CD4-positive, alpha-beta memory T cell (primary cell): ENCODE measurements at regions of chr10 and their contacts with region 1.

Region 1: GRCh38 chr10:30722956-30723620 is 93.5 kb upstream of the LYZL2 start:
- DNase-seq: no peak
- H3K4me3 ChIP-seq: no peak overlapping the region
- H3K4me3 Mint-ChIP-seq: no peak overlapping the region
- H3K27ac ChIP-seq: no peak overlapping the region
- H3K27ac Mint-ChIP-seq: no peak overlapping the region
- H3K4me1 ChIP-seq: no peaks in the 10 kb centered on the region
- H3K4me1 Mint-ChIP-seq: peaks cover 0 to 4% (median 2%) of the 10 kb centered on the region in 4 donors
- H3K27me3 ChIP-seq: no peaks in the 10 kb centered on the region
- H3K27me3 Mint-ChIP-seq: no peaks in the 10 kb centered on the region

Region 2: GRCh38 chr10:30671026-30671616 is 52.0 kb before region 1 on chr10:
- CTCF ChIA-PET with region 1: interaction called, 16 read pairs
- POLR2A ChIA-PET with region 1: no interaction called
- intact Hi-C with region 1: loop called (anchors 1 kb)
- DNase-seq: peak in 4 of 5 donors; percentile 39 to 47 (median 46)
- H3K4me3 ChIP-seq: no peak overlapping the region
- H3K4me3 Mint-ChIP-seq: peak overlapping the region; percentile 15 to 77 (median 68)
- H3K27ac ChIP-seq: no peak overlapping the region
- H3K27ac Mint-ChIP-seq: no peak overlapping the region
- H3K4me1 ChIP-seq: no peaks in the 10 kb centered on the region
- H3K4me1 Mint-ChIP-seq: peaks cover 0 to 7% (median 2%) of the 10 kb centered on the region in 4 donors
- H3K27me3 ChIP-seq: peaks cover 6% of the 10 kb centered on the region
- H3K27me3 Mint-ChIP-seq: peaks cover 2 to 8% of the 10 kb centered on the region in 2 donors

Region 3: GRCh38 chr10:30687698-30688219 is 35.3 kb before region 1 on chr10:
- CTCF ChIA-PET with region 1: interaction called, 279 read pairs
- POLR2A ChIA-PET with region 1: interaction called, 5 read pairs
- intact Hi-C with region 1: loop called (anchors 1 kb)
- DNase-seq: peak; percentile 59 to 76 (median 66)
- H3K4me3 ChIP-seq: no peak overlapping the region
- H3K4me3 Mint-ChIP-seq: no peak overlapping the region
- H3K27ac ChIP-seq: no peak overlapping the region
- H3K27ac Mint-ChIP-seq: peak overlapping the region in 1 of 7 donors; percentile 29
- H3K4me1 ChIP-seq: no peaks in the 10 kb centered on the region
- H3K4me1 Mint-ChIP-seq: peaks cover 0 to 3% (median 0%) of the 10 kb centered on the region in 4 donors
- H3K27me3 ChIP-seq: no peaks in the 10 kb centered on the region
- H3K27me3 Mint-ChIP-seq: peaks cover 9 to 29% of the 10 kb centered on the region in 2 donors

Region 4: DNA sequence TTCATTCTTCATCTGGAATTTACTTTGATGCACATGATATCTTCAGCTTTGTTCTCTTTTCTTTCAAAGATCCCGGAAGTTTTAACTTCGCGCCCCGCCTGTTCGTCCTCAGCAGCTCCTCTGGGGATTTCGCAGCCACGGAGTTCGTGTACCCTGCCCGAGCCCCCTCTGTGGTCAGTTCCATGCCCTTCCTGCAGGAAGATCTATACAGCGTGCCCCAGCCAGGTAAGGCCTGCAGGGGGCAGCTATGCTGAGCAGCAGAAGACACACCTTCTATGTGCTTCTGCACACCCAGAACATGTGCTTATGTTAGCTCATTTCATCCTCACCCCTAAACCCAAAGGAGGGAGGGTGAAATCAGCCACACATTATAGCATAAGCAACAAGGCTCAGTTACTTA is 13.9 kb before region 1 on chr10:
- CTCF ChIA-PET with region 1: interaction called, 38 read pairs
- POLR2A ChIA-PET with region 1: interaction called, 4 read pairs
- intact Hi-C with region 1: loop called (anchors 1 kb)
- DNase-seq: no peak
- H3K4me3 ChIP-seq: no peak overlapping the region
- H3K4me3 Mint-ChIP-seq: no peak overlapping the region
- H3K27ac ChIP-seq: no peak overlapping the region
- H3K27ac Mint-ChIP-seq: peak overlapping the region in 4 of 7 donors; percentile 11 to 84 (median 50)
- H3K4me1 ChIP-seq: peaks cover 18% of the 10 kb centered on the region
- H3K4me1 Mint-ChIP-seq: peaks cover 9 to 24% (median 19%) of the 10 kb centered on the region in 4 donors
- H3K27me3 ChIP-seq: no peaks in the 10 kb centered on the region
- H3K27me3 Mint-ChIP-seq: no peaks in the 10 kb centered on the region

Region 5: DNA sequence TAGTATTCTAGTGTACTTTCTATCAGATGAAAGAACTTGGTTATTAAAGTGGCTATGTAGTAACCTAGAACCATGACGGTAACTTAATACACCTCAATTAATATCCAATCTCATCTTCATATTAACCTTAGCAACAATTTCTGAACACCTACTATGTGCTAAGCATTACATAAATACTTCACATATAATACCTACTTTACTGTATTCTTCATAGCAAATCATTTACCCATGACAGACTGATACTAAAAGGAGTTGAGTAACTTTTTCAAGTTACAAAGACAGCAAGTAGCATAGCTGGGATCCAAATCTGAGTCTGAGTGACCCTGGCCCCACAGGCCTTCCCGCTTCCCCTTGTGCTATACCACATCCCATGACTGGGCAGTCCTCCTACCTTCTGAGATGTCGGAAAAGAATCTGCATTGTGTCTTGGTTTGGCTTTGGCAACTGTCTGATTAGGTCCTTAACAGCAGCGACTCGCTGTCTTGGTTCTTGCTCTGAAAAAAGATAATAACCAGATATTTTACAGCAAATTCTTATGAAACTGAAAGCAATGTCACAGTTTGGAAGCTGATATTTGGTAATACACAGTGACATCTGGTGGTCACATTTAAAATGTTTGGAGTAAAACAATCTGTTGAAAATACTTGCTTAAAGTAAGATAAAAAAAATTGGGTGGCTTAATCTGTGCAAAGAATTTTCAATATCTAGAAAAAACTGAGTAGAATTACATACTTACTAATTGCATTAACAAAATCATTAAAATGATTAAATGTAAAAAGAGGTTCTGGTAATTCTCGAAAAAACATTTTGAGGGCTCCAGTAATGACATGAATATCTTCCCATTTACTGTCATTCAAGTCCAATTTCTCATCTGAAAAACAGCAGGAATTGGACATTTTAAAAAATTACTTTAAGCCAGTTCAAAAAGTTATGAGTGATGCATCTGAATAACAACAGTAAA is 1085.5 kb after region 1 on chr10:
- CTCF ChIA-PET with region 1: interaction called, 6 read pairs
- POLR2A ChIA-PET with region 1: no interaction called
- intact Hi-C with region 1: loop called (anchors 1 kb)
- DNase-seq: peak in 4 of 5 donors; percentile 44 to 50 (median 48)
- H3K4me3 ChIP-seq: no peak overlapping the region
- H3K4me3 Mint-ChIP-seq: peak overlapping the region in 4 of 8 donors; percentile 26 to 71 (median 56)
- H3K27ac ChIP-seq: no peak overlapping the region
- H3K27ac Mint-ChIP-seq: peak overlapping the region in 5 of 7 donors; percentile 71 to 94 (median 88)
- H3K4me1 ChIP-seq: peaks cover 4% of the 10 kb centered on the region
- H3K4me1 Mint-ChIP-seq: peaks cover 3 to 7% (median 4%) of the 10 kb centered on the region in 4 donors
- H3K27me3 ChIP-seq: no peaks in the 10 kb centered on the region
- H3K27me3 Mint-ChIP-seq: no peaks in the 10 kb centered on the region